Left colon (tissue), 2 donors: ENCODE measurements at regions of chr3 and their contacts with region 1.

Region 1: GRCh38 chr3:69439643-69440270 is 53.9 kb upstream of the FRMD4B start:
- DNase-seq: no peak
- ATAC-seq: no peak

Region 2: DNA sequence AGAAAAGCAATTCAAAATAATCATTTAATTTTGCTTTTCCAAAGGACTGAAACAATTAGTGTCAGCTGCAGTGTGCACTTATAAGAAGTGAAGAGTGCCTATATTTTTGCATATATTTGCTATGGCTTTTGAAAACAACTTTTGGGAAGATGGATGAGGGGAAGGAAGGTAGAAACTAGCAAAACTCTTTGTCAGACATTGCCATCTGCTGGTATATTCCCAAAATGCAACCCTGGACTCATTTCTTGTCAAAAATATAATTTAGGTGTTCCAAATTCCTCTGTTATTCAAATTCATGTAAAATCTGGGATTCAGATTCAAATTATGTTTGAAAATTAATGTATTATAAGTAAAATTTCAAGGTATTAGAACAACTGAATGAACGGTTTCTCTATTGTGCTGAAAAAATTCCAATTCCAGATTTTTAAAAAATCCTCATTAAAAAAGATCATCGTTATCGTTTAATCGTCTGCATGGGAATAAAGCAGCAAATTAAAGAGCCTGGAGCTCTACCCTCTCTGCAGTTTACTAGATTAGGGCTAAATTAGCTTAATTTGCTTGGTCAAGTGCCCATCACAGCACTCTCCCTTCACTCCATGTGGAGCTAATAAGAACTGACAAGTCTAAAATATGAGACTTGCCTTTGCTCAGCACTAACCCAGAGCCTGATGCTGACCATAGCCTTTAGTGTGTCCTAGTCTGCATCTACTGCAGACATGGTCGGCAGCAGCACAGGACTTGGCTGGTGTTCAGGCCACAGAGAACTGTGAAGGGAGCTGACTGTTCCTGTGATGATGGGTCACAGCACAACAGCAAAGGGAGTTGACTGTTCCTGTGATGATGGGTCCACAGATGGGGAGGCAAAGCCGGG is 231.6 kb after region 1 on chr3:
- intact Hi-C with region 1: loop called in 1 of 2 experiments (anchors 10 kb)
- DNase-seq: peak in 1 of 2 donors; percentile 16
- ATAC-seq: no peak